ENCODE measurements at regions of chr7 and their contacts with region 1.

Region 1: GRCh38 chr7:64951250-64951848 is 39.5 kb downstream of the ZNF117 start:
- DNase-seq: peak in 2 of 5 donors; percentile 34 to 35
- H3K4me3 ChIP-seq: no peak overlapping the region
- H3K4me3 Mint-ChIP-seq: no peak overlapping the region
- H3K27ac ChIP-seq: no peak overlapping the region
- H3K27ac Mint-ChIP-seq: no peak overlapping the region
- H3K4me1 ChIP-seq: no peaks in the 10 kb centered on the region
- H3K4me1 Mint-ChIP-seq: peaks cover 4% of the 10 kb centered on the region in 3 donors
- H3K27me3 ChIP-seq: peaks cover 12% of the 10 kb centered on the region
- H3K27me3 Mint-ChIP-seq: peaks cover 29 to 51% of the 10 kb centered on the region in 2 donors

Region 2: GRCh38 chr7:64876792-64877713 is 74.3 kb before region 1 on chr7:
- CTCF ChIA-PET with region 1: no interaction called
- POLR2A ChIA-PET with region 1: no interaction called
- DNase-seq: peak; percentile 49 to 87 (median 62)
- H3K4me3 ChIP-seq: peak overlapping the region; percentile 46
- H3K4me3 Mint-ChIP-seq: peak overlapping the region; percentile 59 to 82 (median 77)
- H3K27ac ChIP-seq: no peak overlapping the region
- H3K27ac Mint-ChIP-seq: peak overlapping the region in 6 of 8 donors; percentile 49 to 79 (median 66)
- H3K4me1 ChIP-seq: no peaks in the 10 kb centered on the region
- H3K4me1 Mint-ChIP-seq: peaks cover 6 to 23% (median 13%) of the 10 kb centered on the region in 3 donors
- H3K27me3 ChIP-seq: no peaks in the 10 kb centered on the region
- H3K27me3 Mint-ChIP-seq: peaks cover 19 to 47% of the 10 kb centered on the region in 2 donors

Region 3: GRCh38 chr7:64934478-64934877 is 16.9 kb before region 1 on chr7:
- CTCF ChIA-PET with region 1: no interaction called
- POLR2A ChIA-PET with region 1: no interaction called
- DNase-seq: no peak
- H3K4me3 ChIP-seq: no peak overlapping the region
- H3K4me3 Mint-ChIP-seq: no peak overlapping the region
- H3K27ac ChIP-seq: no peak overlapping the region
- H3K27ac Mint-ChIP-seq: no peak overlapping the region
- H3K4me1 ChIP-seq: no peaks in the 10 kb centered on the region
- H3K4me1 Mint-ChIP-seq: no peaks in the 10 kb centered on the region
- H3K27me3 ChIP-seq: no peaks in the 10 kb centered on the region
- H3K27me3 Mint-ChIP-seq: no peaks in the 10 kb centered on the region

Region 4: GRCh38 chr7:65216459-65216858 is 265.1 kb after region 1 on chr7:
- CTCF ChIA-PET with region 1: interaction called, 14 read pairs
- POLR2A ChIA-PET with region 1: no interaction called
- DNase-seq: peak; percentile 26 to 77 (median 64)
- H3K4me3 ChIP-seq: no peak overlapping the region
- H3K4me3 Mint-ChIP-seq: peak overlapping the region in 2 of 7 donors; percentile 14 to 54
- H3K27ac ChIP-seq: no peak overlapping the region
- H3K27ac Mint-ChIP-seq: peak overlapping the region in 1 of 8 donors; percentile 49
- H3K4me1 ChIP-seq: no peaks in the 10 kb centered on the region
- H3K4me1 Mint-ChIP-seq: peaks cover 0 to 6% (median 2%) of the 10 kb centered on the region in 3 donors
- H3K27me3 ChIP-seq: no peaks in the 10 kb centered on the region
- H3K27me3 Mint-ChIP-seq: peaks cover 0 to 3% of the 10 kb centered on the region in 2 donors